Common myeloid progenitor, CD34-positive (primary cell): ENCODE measurements at regions of chr1 and their contacts with region 1.

Region 1: DNA sequence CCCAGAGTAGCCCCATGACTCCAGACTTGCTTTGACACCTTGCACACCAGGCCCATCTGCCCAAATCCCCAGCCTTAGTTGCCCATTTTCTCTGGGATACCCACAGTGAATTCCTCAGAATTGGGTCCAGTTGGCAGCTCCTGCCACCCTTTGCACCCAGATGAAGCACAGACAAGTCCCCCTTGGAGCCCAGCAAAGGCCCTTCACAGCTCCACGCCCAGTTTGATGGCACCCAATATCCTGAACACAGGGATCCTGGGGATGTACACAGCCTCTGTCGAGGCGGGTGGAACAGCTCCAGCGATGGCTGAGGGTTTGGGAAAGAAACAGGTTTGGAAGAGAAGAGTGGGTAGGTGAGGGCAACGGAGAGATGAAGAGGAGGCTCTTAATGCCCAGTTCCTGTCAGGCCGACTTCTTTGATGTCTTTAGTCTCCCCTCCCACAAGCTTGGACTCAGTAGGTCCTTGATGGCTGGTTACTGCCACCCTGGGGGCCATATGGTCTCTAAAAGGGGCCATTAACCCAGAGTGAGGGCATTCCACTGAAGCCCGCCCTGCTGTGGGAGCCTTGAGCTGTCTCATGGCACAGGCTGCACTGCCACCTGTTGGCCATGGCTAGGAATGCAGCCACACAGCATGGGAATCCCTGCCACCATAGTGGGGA is 21.7 kb downstream of the TMEM53 start:
- DNase-seq: peak; percentile 55 to 74 (median 61)
- H3K4me3 ChIP-seq: no peak overlapping the region
- H3K27ac ChIP-seq: no peak overlapping the region
- H3K4me1 ChIP-seq: no peaks in the 10 kb centered on the region
- H3K27me3 ChIP-seq: no peaks in the 10 kb centered on the region

Region 2: GRCh38 chr1:44377925-44378784 is 274.4 kb before region 1 on chr1:
- CTCF ChIA-PET with region 1: interaction called, 47 read pairs
- POLR2A ChIA-PET with region 1: no interaction called
- DNase-seq: peak; percentile 80 to 88 (median 83)
- H3K4me3 ChIP-seq: no peak overlapping the region
- H3K27ac ChIP-seq: no peak overlapping the region
- H3K4me1 ChIP-seq: peaks cover 0 to 3% (median 1%) of the 10 kb centered on the region in 4 experiments
- H3K27me3 ChIP-seq: no peaks in the 10 kb centered on the region

Region 3: GRCh38 chr1:44485229-44485933 is 167.2 kb before region 1 on chr1:
- CTCF ChIA-PET with region 1: no interaction called
- POLR2A ChIA-PET with region 1: no interaction called
- DNase-seq: peak; percentile 98 to 100 (median 99)
- H3K4me3 ChIP-seq: peak overlapping the region in 1 of 7 experiments; percentile 60
- H3K27ac ChIP-seq: peak overlapping the region; percentile 69 to 89
- H3K4me1 ChIP-seq: peaks cover 26 to 63% (median 53%) of the 10 kb centered on the region in 4 experiments
- H3K27me3 ChIP-seq: no peaks in the 10 kb centered on the region

Region 4: GRCh38 chr1:44571712-44572571 is 80.6 kb before region 1 on chr1:
- CTCF ChIA-PET with region 1: interaction called, 17 read pairs
- POLR2A ChIA-PET with region 1: no interaction called
- DNase-seq: peak in 2 of 3 donors; percentile 50 to 52
- H3K4me3 ChIP-seq: no peak overlapping the region
- H3K27ac ChIP-seq: no peak overlapping the region
- H3K4me1 ChIP-seq: peaks cover 0 to 10% (median 0%) of the 10 kb centered on the region in 4 experiments
- H3K27me3 ChIP-seq: no peaks in the 10 kb centered on the region

Region 5: GRCh38 chr1:44609412-44609767 is 43.2 kb before region 1 on chr1:
- CTCF ChIA-PET with region 1: interaction called, 31 read pairs
- POLR2A ChIA-PET with region 1: no interaction called
- DNase-seq: no peak
- H3K4me3 ChIP-seq: no peak overlapping the region
- H3K27ac ChIP-seq: no peak overlapping the region
- H3K4me1 ChIP-seq: no peaks in the 10 kb centered on the region
- H3K27me3 ChIP-seq: no peaks in the 10 kb centered on the region

Region 6: GRCh38 chr1:44624268-44624901 is 28.2 kb before region 1 on chr1:
- CTCF ChIA-PET with region 1: interaction called, 13 read pairs
- POLR2A ChIA-PET with region 1: no interaction called
- DNase-seq: no peak
- H3K4me3 ChIP-seq: no peak overlapping the region
- H3K27ac ChIP-seq: no peak overlapping the region
- H3K4me1 ChIP-seq: no peaks in the 10 kb centered on the region
- H3K27me3 ChIP-seq: no peaks in the 10 kb centered on the region

Region 7: DNA sequence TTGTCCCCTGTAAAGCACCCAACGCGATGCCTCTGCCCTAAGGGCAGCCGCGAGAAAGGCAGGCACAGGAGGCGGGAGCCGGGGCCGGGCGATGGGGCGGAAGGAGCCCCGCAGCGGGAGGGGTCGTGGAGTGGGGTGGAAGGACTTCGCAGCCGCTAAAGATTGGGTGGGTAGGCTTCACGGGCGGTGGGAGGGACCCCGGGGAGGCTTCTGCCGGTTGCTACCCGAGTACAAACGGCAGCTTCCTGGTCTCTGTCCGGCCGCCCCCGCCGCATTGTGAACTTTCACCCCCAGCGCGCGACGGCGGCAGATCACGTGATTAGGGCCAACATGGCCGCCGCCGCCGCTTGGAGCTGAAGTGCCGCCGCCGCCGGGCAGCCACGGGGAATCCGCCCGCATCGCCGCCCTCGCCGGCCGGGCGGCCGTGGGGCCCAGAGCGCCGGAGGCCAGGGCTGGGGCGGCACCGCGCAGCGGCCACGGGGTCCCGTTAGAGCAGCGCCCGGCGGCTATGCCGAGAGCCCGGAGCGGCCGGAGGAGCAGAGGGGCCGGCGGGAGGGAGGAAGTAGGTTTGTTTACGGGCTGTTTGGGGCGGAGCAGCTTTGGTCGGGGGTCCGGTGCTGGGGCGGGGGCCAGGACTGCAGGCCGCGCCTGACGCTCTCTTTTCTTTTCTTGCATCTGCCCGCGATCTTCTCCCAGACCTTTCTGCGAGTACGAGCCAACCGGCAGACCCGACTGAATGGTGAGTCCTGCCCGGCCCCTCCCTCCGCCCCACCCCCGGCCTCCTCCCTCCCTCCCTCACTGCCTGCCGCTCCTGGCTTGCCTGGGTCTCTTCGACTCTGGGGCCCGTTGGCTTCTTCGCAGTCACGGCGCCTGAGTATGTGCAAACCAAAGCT is 20.7 kb before region 1 on chr1:
- CTCF ChIA-PET with region 1: interaction called, 114 read pairs
- POLR2A ChIA-PET with region 1: no interaction called
- DNase-seq: peak; percentile 82 to 93 (median 90)
- H3K4me3 ChIP-seq: peak overlapping the region; percentile 54 to 79 (median 64)
- H3K27ac ChIP-seq: peak overlapping the region; percentile 71 to 86
- H3K4me1 ChIP-seq: peaks cover 2 to 21% (median 10%) of the 10 kb centered on the region in 4 experiments
- H3K27me3 ChIP-seq: no peaks in the 10 kb centered on the region

Region 8: DNA sequence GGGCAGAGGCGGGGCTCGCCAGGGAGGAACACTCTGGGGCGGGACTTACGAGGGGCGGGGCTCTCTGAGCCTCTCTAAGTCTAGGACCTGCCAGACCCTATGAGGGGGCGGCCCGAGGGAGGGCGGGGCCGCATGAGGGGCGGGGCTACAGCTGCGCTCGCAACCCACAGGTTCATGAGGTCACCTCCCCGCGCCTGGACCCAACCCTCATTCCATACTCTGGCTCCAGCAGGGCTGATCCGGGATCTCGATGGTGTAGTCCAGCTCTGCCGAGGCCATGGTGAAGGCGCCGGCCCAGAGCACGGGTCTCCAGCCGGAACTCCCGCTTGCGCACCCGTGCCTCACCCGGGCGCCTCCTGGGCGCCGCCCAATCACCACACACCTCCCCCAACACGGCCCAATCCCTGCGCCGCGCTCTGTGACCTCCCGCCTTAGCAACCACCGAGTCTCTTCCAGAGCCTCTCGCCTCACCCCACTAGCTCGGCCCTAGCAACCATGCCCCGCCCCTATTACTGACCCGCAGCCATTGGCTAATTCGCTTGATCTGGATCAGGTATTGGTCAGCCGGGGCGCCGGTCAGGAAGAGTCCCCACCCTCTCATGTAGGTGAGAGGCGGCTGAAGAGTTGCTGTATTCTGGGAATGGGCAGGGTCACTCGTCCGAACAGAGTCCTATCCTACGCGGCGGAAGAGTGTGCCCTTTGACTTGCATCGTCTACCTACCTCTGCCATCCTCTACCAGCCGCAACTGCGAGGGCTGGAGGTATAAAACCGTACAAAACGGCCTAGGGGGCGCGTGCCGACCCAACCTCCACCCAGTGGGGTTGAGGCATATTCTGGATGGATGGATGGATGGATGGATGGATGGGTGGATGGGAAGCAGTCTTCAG is 21.8 kb after region 1 on chr1 and contains the starts of genes ARMH1 and TMEM53:
- CTCF ChIA-PET with region 1: interaction called, 25 read pairs
- POLR2A ChIA-PET with region 1: interaction called, 3 read pairs
- DNase-seq: peak; percentile 99
- H3K4me3 ChIP-seq: peak within 1 kb of the TSS; percentile 63 to 92 (median 81)
- H3K27ac ChIP-seq: peak within 1 kb of the TSS; percentile 59 to 84
- H3K4me1 ChIP-seq: peaks cover 22 to 76% (median 53%) of the 10 kb centered on the region in 4 experiments
- H3K27me3 ChIP-seq: no peaks in the 10 kb centered on the region